ENCODE measurements at regions of chr14 and their contacts with region 1.

Region 1: DNA sequence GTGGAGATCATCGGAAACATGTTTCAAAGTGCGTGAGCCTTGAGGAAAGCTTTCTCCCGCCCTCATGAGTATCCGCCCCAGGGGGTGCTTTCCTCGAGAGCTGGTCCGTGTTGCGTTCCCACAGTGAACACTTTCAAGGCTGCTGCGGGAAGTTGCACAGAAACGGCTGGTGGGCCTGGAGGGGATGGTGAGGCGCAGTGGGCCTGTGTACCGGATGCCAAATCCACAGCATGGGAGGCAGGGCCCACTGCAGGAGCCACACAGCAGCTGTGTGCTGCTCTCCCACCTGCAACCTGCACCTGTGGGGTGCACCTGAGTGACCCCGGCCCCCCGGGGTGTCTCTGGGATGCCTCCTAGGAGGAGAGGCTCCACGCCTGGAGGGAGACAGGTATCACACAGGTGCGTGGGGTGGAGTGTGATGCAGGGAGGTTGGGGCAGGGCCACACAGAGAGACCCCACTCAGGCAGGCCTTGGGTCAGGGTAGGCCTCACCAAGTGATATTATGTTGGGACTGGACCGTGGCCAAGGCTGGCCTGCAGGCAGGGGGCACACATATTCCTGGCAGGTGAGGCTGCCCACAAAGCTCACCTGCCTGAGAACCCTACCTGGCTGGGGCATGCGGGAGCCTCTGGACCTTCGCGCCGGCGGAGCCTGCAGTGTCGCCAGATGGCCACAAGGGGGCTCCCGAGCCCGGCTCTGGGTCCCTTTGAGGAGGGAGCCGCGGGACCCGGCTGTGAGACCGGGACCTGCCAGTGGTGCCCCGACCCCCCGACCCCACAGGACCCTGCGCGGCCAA is 11.2 kb downstream of the TMEM121 start:
- DNase-seq: peak; percentile 90
- CTCF ChIP-seq: peak; percentile 96

Region 2: DNA sequence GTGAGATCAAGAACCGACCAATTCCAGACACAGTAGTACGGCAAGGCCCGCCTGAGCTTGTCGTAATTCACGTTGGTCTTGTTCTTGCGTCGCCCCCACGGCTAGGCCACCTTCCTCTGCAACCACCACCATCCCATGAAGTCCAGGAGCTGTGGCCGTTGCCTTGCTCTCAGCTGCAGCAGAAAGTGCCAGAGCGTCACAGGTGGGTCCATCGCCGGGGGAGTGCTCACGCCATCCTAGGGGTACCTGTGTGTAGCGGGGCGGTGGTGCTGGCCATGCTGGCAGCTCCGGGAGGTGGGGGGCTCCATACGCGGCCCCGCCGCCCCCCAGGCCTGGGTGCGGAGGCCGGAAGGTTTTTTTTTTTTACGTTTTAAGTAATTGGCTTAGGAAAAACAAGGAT is 11.9 kb after region 1 on chr14:
- CTCF ChIA-PET with region 1: interaction called, 39 read pairs
- POLR2A ChIA-PET with region 1: no interaction called
- DNase-seq: no peak
- CTCF ChIP-seq: no peak